HAP-1 (cell line): ENCODE measurements at regions of chr3 and their contacts with region 1.

Region 1: DNA sequence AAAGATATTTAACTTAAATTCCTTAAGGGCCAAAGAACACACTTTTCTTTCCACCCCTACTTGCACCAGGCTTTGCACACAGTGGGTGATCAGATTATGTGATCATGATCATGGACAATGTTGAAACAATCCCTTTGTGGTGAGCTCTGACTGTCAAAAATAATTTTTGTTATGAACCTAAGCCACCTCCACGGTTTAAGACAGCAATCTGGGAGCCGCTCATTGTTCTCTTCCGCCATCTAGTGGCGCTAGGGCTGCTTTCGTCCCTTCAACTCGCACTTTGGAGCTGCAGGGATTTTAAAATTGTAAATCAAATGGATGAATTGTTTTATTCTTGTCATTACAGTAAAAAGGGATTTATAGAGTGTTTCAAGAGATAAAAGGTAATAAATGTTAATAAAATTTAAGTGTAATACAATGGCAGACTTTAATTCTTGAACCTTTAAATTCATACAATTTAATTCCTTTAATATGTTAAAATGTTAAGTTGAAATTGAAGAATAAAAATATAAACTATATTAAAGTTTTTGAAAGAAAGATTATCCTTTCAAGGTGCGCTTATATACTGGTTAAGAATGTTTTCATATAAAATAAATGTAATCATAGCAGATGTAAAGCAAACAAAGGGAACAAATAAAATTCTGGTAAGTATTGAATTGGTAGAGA is 45.3 kb upstream of the ARL6 start:
- DNase-seq: peak; percentile 68 to 83
- H3K4me3 ChIP-seq: no peak overlapping the region
- H3K4me1 ChIP-seq: no peaks in the 10 kb centered on the region
- H3K27me3 ChIP-seq: no peaks in the 10 kb centered on the region

Region 2: DNA sequence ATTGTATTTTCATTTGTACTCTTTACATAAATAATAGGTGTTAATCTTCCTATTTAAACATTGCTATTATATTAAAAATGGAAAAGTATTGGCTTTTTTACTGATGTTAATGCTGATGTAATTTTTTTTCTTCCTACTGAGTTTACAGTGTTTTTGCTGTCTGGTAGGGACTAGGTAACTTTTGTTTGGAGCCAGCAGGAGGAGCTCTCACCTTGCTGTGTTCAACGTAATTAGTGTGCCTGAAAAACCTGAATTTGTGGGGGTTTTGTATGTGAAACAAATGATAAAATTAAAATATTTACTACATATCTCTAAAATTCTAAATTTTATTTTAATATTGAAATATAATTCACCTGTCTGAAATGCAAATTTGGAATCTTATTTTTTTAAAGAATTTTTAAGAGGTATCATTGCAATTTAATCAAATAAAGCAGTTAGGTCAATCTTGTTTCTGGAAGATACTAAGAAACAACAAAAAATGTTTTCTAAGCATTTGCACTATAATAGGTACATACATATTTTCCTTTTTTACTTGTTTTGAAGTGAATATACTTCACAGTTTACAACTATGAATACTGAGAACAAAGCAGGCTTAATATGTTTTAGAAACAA is 856.1 kb before region 1 on chr3:
- in situ Hi-C with region 1: loop called (anchors 25 kb)
- DNase-seq: peak; percentile 58 to 65
- H3K4me3 ChIP-seq: no peak overlapping the region
- H3K4me1 ChIP-seq: no peaks in the 10 kb centered on the region
- H3K27me3 ChIP-seq: no peaks in the 10 kb centered on the region